Caco-2 (cell line): ENCODE measurements at regions of chr14 and their contacts with region 1.

Region 1: DNA sequence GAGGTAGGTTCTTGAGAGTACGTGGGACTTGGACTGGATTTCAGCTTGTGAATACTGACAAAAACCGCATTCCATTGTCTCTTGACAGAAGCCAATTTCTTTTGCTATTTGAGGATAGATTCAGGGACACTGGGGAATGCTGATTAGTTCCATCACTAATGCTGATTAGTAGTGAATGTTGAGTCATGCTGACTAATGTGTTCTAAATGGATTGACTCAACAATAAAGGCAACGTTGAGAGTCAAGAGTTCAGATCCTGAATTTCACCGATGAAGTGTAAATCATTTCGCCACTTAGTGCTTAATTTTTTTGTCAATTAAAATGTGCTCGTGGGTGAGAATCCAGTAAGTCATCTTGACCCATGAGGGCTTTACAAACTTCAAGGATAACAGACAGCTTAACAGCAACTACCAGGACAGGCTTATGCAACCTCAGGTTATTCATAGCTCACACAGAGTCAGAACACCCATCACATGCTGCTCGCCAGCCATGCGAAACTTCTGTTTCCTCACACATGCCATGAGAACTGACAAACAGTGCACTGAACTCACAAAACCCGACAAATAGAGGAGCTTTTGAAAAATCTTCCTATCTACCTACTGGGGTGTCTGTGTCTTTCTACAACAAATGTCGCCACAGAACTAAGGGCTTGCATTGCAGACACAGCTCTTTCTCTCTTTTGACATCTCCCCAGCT is 316.5 kb downstream of the ZFP36L1 start:
- DNase-seq: no peak
- H3K4me3 ChIP-seq: no peak overlapping the region
- H3K4me3 Mint-ChIP-seq: no peak overlapping the region
- H3K27ac Mint-ChIP-seq: peak overlapping the region; percentile 83
- H3K4me1 ChIP-seq: peaks cover 76% of the 10 kb centered on the region
- H3K4me1 Mint-ChIP-seq: peaks cover 79% of the 10 kb centered on the region
- H3K27me3 ChIP-seq: no peaks in the 10 kb centered on the region
- H3K27me3 Mint-ChIP-seq: no peaks in the 10 kb centered on the region
- CTCF ChIP-seq: no peak

Region 2: DNA sequence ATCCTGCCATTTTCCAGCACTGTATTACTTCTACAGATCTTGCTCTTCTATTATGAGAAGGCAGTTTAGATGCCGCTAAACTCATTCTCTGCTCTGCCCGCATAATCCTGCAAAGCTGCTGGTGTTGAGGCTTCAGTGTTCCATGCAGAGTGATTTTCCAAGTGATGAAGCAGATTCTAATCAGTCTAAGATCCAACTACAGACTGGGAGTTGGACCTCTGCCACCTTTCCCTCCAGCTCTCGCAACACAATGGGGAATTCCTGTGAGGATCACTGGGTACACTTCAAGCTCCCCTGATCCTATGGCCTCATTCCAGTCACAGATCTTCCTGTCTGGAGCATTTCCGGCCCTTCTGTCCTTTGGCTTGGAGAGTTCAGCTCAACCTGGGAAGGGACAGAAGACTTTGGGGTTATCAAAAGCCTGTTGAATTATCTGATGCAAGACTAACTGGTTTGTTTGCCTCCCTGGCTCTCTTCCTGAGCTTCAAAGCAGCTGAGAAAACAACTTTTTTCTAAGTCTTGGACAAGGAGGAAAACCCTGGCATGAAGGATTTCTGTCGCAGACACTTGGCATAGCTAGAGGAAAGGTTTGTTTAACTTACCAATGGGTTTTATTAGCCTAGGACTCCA is 17.4 kb before region 1 on chr14:
- CTCF ChIA-PET with region 1: interaction called, 3 read pairs
- POLR2A ChIA-PET with region 1: no interaction called
- intact Hi-C with region 1: loop called (anchors 1 kb)
- DNase-seq: peak; percentile 67 to 87
- H3K4me3 ChIP-seq: no peak overlapping the region
- H3K4me3 Mint-ChIP-seq: peak overlapping the region; percentile 36
- H3K27ac Mint-ChIP-seq: peak overlapping the region; percentile 84
- H3K4me1 ChIP-seq: peaks cover 20% of the 10 kb centered on the region
- H3K4me1 Mint-ChIP-seq: peaks cover 27% of the 10 kb centered on the region
- H3K27me3 ChIP-seq: no peaks in the 10 kb centered on the region
- H3K27me3 Mint-ChIP-seq: no peaks in the 10 kb centered on the region
- CTCF ChIP-seq: no peak

Region 3: GRCh38 chr14:68564826-68565760 is 88.7 kb after region 1 on chr14:
- CTCF ChIA-PET with region 1: no interaction called
- POLR2A ChIA-PET with region 1: no interaction called
- intact Hi-C with region 1: loop called (anchors 5 kb)
- DNase-seq: peak; percentile 17 to 56
- H3K4me3 ChIP-seq: no peak overlapping the region
- H3K4me3 Mint-ChIP-seq: no peak overlapping the region
- H3K27ac Mint-ChIP-seq: peak overlapping the region; percentile 70
- H3K4me1 ChIP-seq: peaks cover 33% of the 10 kb centered on the region
- H3K4me1 Mint-ChIP-seq: peaks cover 30% of the 10 kb centered on the region
- H3K27me3 ChIP-seq: no peaks in the 10 kb centered on the region
- H3K27me3 Mint-ChIP-seq: no peaks in the 10 kb centered on the region
- CTCF ChIP-seq: no peak